ENCODE measurements at regions of chr15 and their contacts with region 1.

Region 1: GRCh38 chr15:64162870-64163658 is at the start of gene PPIB:
- DNase-seq: peak; percentile 97
- H3K4me3 Mint-ChIP-seq: peak within 1 kb of the TSS; percentile 91
- H3K27ac Mint-ChIP-seq: peak within 1 kb of the TSS; percentile 86
- H3K4me1 Mint-ChIP-seq: peaks cover 29% of the 10 kb centered on the region
- H3K27me3 Mint-ChIP-seq: no peaks in the 10 kb centered on the region
- CTCF ChIP-seq: peak; percentile 13
- total RNA-seq, gene PPIB: 874 and 1,247 TPM in 2 replicates

Region 2: GRCh38 chr15:64046347-64047153 is 116.5 kb before region 1 on chr15 and contains the start of gene DAPK2:
- CTCF ChIA-PET with region 1: no interaction called
- POLR2A ChIA-PET with region 1: no interaction called
- intact Hi-C with region 1: no loop called
- DNase-seq: peak; percentile 72
- H3K4me3 Mint-ChIP-seq: peak within 1 kb of the TSS; percentile 62
- H3K27ac Mint-ChIP-seq: no peak within 1 kb of the TSS
- H3K4me1 Mint-ChIP-seq: peaks cover 5% of the 10 kb centered on the region
- H3K27me3 Mint-ChIP-seq: peaks cover 12% of the 10 kb centered on the region
- CTCF ChIP-seq: peak; percentile 86
- total RNA-seq, gene DAPK2: 4.6 and 6.8 TPM in 2 replicates

Region 3: GRCh38 chr15:64093627-64094417 is 69.2 kb before region 1 on chr15 and contains the start of gene CIAO2A:
- CTCF ChIA-PET with region 1: no interaction called
- POLR2A ChIA-PET with region 1: interaction called, 64 read pairs
- intact Hi-C with region 1: no loop called
- DNase-seq: peak; percentile 99
- H3K4me3 Mint-ChIP-seq: peak within 1 kb of the TSS; percentile 92
- H3K27ac Mint-ChIP-seq: peak within 1 kb of the TSS; percentile 96
- H3K4me1 Mint-ChIP-seq: peaks cover 30% of the 10 kb centered on the region
- H3K27me3 Mint-ChIP-seq: no peaks in the 10 kb centered on the region
- CTCF ChIP-seq: no peak
- total RNA-seq, gene CIAO2A: 38.7 and 44.7 TPM in 2 replicates

Region 4: DNA sequence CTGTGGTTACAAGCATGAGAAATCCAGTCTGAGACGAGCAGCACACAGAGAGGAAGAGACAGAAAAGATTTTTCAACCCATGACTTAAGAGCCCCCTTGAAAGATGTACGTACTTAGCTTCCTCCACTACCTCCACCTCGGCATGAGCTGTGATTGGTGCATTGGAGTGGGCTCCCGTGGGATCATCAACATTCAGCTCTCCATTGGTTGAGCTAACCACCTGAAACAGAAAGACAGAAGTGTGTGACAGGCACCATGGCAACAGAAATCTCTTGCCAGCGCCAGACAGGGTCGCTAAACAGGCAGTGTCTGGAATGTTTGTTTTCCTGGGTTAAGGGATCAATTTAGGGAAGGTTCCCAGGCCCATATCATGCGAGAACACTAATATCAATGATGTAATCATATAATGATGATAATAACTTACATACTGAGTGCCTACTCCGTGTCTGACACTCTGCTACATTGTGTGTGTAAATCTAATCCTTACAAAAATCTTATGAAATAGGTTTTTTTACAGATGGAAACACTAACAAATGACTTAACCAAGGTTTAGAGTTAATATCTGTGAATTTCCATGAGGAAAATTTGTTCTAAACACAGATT is 17.3 kb after region 1 on chr15:
- CTCF ChIA-PET with region 1: interaction called, 7 read pairs
- POLR2A ChIA-PET with region 1: interaction called, 12 read pairs
- intact Hi-C with region 1: no loop called
- DNase-seq: no peak
- H3K4me3 Mint-ChIP-seq: no peak overlapping the region
- H3K27ac Mint-ChIP-seq: no peak overlapping the region
- H3K4me1 Mint-ChIP-seq: no peaks in the 10 kb centered on the region
- H3K27me3 Mint-ChIP-seq: no peaks in the 10 kb centered on the region
- CTCF ChIP-seq: no peak

Region 5: DNA sequence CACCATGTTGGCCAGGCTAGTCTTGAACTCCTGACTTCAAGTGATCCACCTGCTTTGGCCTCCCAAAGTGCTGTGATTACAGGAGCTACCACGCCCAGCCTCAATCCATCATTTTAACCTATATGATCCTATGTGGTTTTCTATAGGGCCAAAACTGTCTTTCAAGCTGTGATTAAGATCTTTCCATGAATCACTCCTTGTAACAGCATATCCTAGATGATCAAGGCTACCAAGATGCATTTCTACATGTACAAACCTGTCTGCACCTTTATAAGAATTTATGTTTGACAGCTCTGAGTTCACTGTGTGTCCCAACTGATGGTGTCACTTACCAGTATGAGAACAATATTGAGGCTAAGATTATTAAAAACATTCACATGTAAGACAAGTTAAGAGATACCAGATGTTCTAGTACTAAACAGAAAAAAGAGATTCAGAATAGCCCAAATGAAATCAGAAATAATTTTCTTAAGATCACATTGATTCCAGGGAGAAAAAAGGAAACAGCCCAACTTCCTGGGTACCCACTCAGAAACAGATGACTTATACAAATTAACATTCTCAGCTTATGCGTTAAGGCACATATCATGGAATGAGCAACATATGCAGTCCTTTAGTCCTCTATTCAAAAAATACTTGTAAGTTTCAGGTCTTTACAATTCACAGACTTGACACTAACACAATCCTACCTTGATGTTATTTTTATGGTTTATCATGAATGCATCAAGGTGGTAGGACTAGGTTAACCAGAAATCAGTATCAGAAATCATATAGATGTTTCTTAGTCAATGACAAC is 24.5 kb after region 1 on chr15:
- CTCF ChIA-PET with region 1: interaction called, 7 read pairs
- POLR2A ChIA-PET with region 1: interaction called, 18 read pairs
- intact Hi-C with region 1: no loop called
- DNase-seq: peak; percentile 58
- H3K4me3 Mint-ChIP-seq: no peak overlapping the region
- H3K27ac Mint-ChIP-seq: peak overlapping the region; percentile 11
- H3K4me1 Mint-ChIP-seq: peaks cover 6% of the 10 kb centered on the region
- H3K27me3 Mint-ChIP-seq: no peaks in the 10 kb centered on the region
- CTCF ChIP-seq: no peak

Region 6: GRCh38 chr15:64387562-64388168 is 224.6 kb after region 1 on chr15 and contains the start of gene TRIP4:
- CTCF ChIA-PET with region 1: interaction called, 5 read pairs
- POLR2A ChIA-PET with region 1: interaction called, 35 read pairs
- intact Hi-C with region 1: no loop called
- DNase-seq: peak; percentile 94
- H3K4me3 Mint-ChIP-seq: peak within 1 kb of the TSS; percentile 100
- H3K27ac Mint-ChIP-seq: peak within 1 kb of the TSS; percentile 94
- H3K4me1 Mint-ChIP-seq: peaks cover 16% of the 10 kb centered on the region
- H3K27me3 Mint-ChIP-seq: no peaks in the 10 kb centered on the region
- CTCF ChIP-seq: no peak
- total RNA-seq, gene TRIP4: 19.8 and 26.0 TPM in 2 replicates

Measured in MCF 10A (cell line).